ENCODE measurements at regions of chr16 and their contacts with region 1.

Region 1: DNA sequence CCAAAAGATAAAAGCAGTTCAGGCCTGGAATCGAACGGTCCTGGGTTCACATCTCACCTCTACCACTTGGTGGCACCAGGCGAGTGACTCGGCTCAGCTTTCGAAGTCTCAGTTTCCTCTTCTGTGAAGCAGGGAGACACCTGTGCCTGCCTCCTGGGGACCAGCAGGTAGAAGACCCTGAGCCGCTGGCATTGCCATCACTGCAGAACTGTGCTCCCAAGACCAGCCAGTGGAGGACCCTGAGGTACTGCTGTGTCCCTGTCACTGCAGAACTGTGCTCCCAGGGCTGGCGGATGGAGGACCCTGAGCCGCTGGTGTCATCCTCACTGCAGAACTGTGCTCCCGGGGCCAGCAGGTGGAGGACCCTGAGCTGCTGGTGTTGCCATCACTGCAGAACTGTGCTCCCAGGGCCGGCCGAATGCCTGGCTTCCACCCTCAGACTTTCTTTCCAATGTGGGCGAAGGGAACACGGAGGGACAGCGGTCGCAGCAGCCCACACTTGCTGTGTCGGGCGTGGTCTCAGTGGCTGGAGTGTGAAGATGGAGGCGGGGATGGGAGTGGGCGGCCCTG is 8.7 kb upstream of the SLC7A5 start:
- DNase-seq: no peak
- H3K4me3 ChIP-seq: no peak overlapping the region
- H3K27ac ChIP-seq: no peak overlapping the region
- H3K4me1 ChIP-seq: no peaks in the 10 kb centered on the region
- H3K27me3 ChIP-seq: peaks cover 0 to 54% (median 18%) of the 10 kb centered on the region in 3 donors
- CTCF ChIP-seq: no peak
- EP300 ChIP-seq: no peak
- POLR2A ChIP-seq: no peak

Region 2: DNA sequence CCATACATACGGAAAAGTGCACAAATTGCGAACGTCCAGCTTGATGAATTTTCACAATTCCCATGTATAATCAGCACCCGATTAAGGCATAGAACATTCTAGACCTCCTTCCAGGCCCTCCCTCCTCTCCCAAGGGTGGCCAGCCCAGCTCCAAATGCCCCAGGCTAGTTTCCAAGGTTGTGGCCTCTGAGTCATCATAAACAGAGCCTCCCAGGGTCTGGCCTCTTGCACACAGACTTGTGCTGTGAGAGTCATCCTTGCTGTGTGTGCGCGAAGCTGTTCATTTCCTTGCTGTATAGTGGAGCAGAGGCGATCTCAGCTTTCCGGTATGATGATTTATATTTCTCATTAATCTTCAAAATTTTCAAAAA is 296.2 kb before region 1 on chr16:
- intact Hi-C with region 1: loop called (anchors 10 kb)
- DNase-seq: peak; percentile 93
- H3K4me3 ChIP-seq: peak overlapping the region in 2 of 4 donors; percentile 10 to 17
- H3K27ac ChIP-seq: peak overlapping the region; percentile 82 to 91 (median 88)
- H3K4me1 ChIP-seq: peaks cover 0 to 30% (median 24%) of the 10 kb centered on the region in 4 donors
- H3K27me3 ChIP-seq: peaks cover 0 to 15% (median 2%) of the 10 kb centered on the region in 3 donors
- CTCF ChIP-seq: no peak
- EP300 ChIP-seq: peak in 1 of 4 donors; percentile 49
- POLR2A ChIP-seq: no peak

Measured in sigmoid colon (tissue), 7 donors.